Activated T-helper 2 cell treated with anti-CD3 and anti-CD28 coated beads, Interferon-gamma antibody, Interleukin-2, Interleukin-4, amounts not matched to agents 10 μg/mL and 5 μg/mL and 100 μg/mL, durations not matched to agents 14 hours and 24 hours and 36 hours (primary cell): ENCODE measurements at regions of chr19 and their contacts with region 1.

Region 1: DNA sequence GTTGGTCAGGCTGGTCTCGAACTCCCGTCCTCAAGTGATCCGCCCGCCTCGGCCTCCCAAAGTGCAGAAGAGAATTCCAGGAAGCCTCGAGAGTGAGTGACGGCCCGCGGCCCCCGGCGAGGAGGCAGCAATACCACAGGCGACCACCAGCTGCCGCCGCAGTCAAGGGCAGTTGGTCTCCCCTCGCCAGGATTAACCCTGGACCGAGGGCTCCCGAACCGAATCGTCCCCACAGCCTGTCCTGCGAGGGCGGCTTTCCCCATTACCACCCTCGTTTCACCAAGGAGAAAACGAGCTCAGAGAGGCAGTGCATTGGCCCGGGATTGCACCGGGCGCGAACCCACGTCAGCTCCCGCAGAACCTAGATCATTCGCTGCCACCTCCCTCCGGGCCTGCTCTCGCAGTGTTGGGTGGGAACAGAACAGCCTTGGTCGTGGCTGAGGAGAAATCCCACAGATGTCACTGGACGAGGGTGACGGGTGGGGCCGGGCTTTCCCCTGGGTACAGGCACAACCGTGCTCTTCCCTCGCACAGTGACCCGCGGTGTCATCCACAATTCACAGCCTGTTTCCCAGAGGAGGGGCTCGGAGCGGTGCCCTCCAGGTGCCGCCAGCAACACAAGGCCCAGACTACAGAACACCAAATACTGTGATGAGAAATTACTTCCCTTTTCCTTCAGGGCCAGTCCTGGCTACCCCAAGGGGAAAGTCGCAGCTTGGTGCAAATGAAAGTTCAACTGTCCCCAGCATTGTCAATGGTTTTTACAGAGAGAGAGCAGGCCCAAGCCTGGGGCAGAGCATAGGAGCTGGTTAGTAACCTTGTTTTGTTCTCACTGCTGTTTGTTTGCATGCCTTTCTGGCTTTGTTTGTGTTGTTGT is 24.8 kb downstream of the C2CD4C start:
- DNase-seq: no peak
- H3K4me3 Mint-ChIP-seq: peak overlapping the region; percentile 5
- H3K27ac Mint-ChIP-seq: peak overlapping the region; percentile 17
- H3K4me1 Mint-ChIP-seq: peaks cover 19% of the 10 kb centered on the region
- H3K27me3 Mint-ChIP-seq: peaks cover 22% of the 10 kb centered on the region

Region 2: GRCh38 chr19:488505-489417 is 104.6 kb after region 1 on chr19:
- intact Hi-C with region 1: loop called (anchors 5 kb)
- DNase-seq: peak; percentile 85
- H3K4me3 Mint-ChIP-seq: peak overlapping the region; percentile 80
- H3K27ac Mint-ChIP-seq: peak overlapping the region; percentile 86
- H3K4me1 Mint-ChIP-seq: peaks cover 4% of the 10 kb centered on the region
- H3K27me3 Mint-ChIP-seq: peaks cover 9% of the 10 kb centered on the region